AG04450 (cell line): ENCODE measurements at regions of chr17 and their contacts with region 1.

Region 1: DNA sequence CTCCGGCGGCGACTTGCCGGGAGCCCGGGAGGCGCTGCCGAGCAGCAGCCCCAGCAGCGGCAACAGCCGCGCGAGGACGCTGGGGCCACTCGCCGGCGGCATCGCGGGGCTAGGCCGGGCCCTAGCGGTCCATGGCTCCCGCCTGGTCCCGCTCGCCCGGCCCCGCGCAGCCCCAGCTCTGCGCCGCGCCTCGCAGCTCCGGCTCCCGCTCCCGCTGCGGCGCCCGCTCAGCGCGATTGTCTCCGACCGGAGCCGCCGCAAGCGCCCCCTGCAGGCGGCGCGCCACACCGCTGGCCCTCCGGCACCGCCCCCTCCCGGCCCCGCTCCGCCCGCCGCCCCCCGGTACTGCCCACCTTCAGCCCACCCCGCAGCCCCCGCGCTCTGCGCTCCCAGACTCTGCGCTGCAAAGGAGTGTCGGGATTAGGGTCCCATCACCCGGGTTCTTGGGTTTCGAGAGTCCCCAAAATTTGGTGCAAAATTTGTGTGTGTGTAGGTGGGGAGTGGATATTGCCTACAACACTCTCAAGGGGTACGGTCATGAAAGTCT is at the start of gene FAM171A2:
- DNase-seq: peak; percentile 20
- H3K4me3 ChIP-seq: peak within 1 kb of the TSS; percentile 71
- H3K27ac ChIP-seq: no peak within 1 kb of the TSS
- H3K27me3 ChIP-seq: peaks cover 21% of the 10 kb centered on the region
- CTCF ChIP-seq: peak; percentile 28; the same call in 1 of the 2 replicates
- polyA plus RNA-seq, gene FAM171A2: 5.3 and 8.0 TPM in 2 replicates

Region 2: DNA sequence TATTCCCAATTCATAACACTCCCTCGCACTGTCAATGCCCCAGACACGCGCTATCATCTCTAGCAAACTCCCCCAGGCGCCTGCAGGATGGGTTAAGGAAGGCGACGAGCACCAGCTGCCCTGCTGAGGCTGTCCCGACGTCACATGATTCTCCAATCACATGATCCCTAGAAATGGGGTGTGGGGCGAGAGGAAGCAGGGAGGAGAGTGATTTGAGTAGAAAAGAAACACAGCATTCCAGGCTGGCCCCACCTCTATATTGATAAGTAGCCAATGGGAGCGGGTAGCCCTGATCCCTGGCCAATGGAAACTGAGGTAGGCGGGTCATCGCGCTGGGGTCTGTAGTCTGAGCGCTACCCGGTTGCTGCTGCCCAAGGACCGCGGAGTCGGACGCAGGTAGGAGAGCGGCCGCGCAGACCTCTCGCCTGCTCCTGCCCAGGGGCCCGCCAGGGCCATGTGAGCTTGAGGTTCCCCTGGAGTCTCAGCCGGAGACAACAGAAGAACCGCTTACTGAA is 18.7 kb before region 1 on chr17 and contains the start of gene GRN:
- CTCF ChIA-PET with region 1: interaction called, 9 read pairs
- POLR2A ChIA-PET with region 1: interaction called, 10 read pairs
- DNase-seq: peak; percentile 98
- H3K4me3 ChIP-seq: peak within 1 kb of the TSS; percentile 98
- H3K27ac ChIP-seq: peak within 1 kb of the TSS; percentile 11
- H3K27me3 ChIP-seq: peaks cover 4% of the 10 kb centered on the region
- CTCF ChIP-seq: no peak
- polyA plus RNA-seq, gene GRN: 203 and 322 TPM in 2 replicates

Region 3: GRCh38 chr17:44350733-44351226 is 12.9 kb before region 1 on chr17:
- CTCF ChIA-PET with region 1: interaction called, 9 read pairs
- POLR2A ChIA-PET with region 1: interaction called, 10 read pairs
- DNase-seq: no peak
- H3K4me3 ChIP-seq: no peak overlapping the region
- H3K27ac ChIP-seq: no peak overlapping the region
- H3K27me3 ChIP-seq: no peaks in the 10 kb centered on the region
- CTCF ChIP-seq: peak; percentile 81

Region 4: GRCh38 chr17:44376124-44376523 is 12.4 kb after region 1 on chr17:
- CTCF ChIA-PET with region 1: interaction called, 18 read pairs
- POLR2A ChIA-PET with region 1: no interaction called
- DNase-seq: no peak
- H3K4me3 ChIP-seq: no peak overlapping the region
- H3K27ac ChIP-seq: no peak overlapping the region
- H3K27me3 ChIP-seq: peaks cover 13% of the 10 kb centered on the region
- CTCF ChIP-seq: peak; percentile 51

Region 5: GRCh38 chr17:44487170-44487569 is 123.5 kb after region 1 on chr17:
- CTCF ChIA-PET with region 1: no interaction called
- POLR2A ChIA-PET with region 1: no interaction called
- DNase-seq: no peak
- H3K4me3 ChIP-seq: no peak overlapping the region
- H3K27ac ChIP-seq: no peak overlapping the region
- H3K27me3 ChIP-seq: no peaks in the 10 kb centered on the region
- CTCF ChIP-seq: no peak